CD8-positive, alpha-beta T cell (primary cell): ENCODE measurements at regions of chr3 and their contacts with region 1.

Region 1: DNA sequence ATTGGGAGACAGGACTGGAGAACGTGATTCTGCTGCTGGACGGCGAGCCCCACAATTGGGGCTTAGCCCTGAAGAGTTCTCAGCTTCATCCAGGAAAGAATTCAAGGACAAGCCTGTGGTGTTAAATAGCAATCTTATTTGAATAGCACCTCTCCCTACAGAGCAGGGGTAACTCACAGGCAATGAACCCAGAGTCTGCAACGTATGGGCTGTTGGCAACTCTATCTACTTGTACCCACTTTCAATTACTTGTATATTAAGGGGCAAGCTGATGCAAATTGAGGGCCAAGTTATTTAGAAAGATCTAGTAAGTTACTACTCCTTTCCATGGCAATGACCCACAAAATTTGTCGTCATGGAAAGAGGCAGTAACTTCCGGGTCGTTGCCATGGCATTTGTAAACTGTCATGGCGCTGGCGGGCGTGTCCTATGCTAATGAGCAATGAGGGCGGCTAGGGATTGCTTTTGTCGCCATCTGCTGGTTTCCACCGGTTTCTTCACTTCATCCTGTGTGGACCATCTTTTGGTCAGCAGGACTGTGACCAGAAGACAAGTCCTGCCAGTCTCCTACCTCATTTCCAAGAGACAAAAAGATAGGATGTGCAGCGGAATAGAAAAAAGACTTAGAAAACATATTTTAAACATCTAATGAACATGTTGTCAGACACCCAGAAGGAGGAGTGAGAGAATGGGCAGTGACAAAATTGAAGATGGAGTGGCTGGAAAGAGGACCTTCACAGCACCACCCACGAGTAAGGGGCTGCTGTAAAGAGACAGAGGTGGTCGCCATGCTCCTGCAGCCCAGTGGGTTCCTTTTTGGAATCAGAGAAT is 45.8 kb upstream of the SH3BP5 start:
- DNase-seq: peak; percentile 88 to 97 (median 93)
- ATAC-seq: peak; percentile 97
- H3K4me3 ChIP-seq: no peak overlapping the region
- H3K4me3 Mint-ChIP-seq: no peak overlapping the region
- H3K27ac ChIP-seq: peak overlapping the region; percentile 55 to 90
- H3K27ac Mint-ChIP-seq: peak overlapping the region; percentile 89
- H3K4me1 ChIP-seq: peaks cover 5% of the 10 kb centered on the region
- H3K4me1 Mint-ChIP-seq: peaks cover 8% of the 10 kb centered on the region
- H3K27me3 ChIP-seq: no peaks in the 10 kb centered on the region
- H3K27me3 Mint-ChIP-seq: no peaks in the 10 kb centered on the region
- CTCF ChIP-seq: peak; percentile 85

Region 2: DNA sequence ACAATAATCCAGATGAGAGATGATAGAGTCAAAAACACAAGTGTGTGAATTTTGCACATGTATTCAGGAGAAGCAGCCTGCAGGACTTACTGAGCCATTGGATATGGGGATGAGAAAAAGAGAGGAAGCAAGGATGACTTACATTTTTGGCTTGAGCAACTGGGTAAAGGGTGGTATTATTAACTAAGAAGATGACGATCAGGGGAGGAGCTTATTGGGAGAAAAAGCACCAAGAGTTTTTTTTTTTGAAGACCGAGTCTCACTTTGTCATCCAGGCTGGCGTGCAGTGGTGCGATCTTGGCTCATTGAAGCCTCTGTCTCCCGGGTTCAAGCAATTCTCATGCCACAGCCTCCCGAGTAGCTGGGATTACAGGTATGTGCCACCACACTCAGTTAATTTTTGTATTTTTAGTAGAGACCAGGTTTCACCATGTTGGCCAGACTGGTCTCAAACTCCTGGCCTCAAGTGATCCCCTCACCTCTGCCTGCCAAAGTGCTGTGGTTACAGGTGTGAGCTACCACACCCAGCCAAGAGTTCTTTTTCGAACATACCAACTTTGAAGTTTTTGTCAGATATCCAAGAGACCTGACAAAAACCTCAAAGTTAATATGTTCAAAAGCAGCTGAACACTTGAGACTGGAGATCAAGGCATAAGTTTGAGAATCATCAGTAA is 31.0 kb before region 1 on chr3:
- CTCF ChIA-PET with region 1: no interaction called
- POLR2A ChIA-PET with region 1: no interaction called
- intact Hi-C with region 1: no loop called
- DNase-seq: peak in 2 of 9 experiments; percentile 43 to 54
- ATAC-seq: peak; percentile 29
- H3K4me3 ChIP-seq: no peak overlapping the region
- H3K4me3 Mint-ChIP-seq: peak overlapping the region; percentile 69
- H3K27ac ChIP-seq: no peak overlapping the region
- H3K27ac Mint-ChIP-seq: peak overlapping the region; percentile 73
- H3K4me1 ChIP-seq: peaks cover 34% of the 10 kb centered on the region
- H3K4me1 Mint-ChIP-seq: peaks cover 35% of the 10 kb centered on the region
- H3K27me3 ChIP-seq: no peaks in the 10 kb centered on the region
- H3K27me3 Mint-ChIP-seq: no peaks in the 10 kb centered on the region
- CTCF ChIP-seq: no peak

Region 3: DNA sequence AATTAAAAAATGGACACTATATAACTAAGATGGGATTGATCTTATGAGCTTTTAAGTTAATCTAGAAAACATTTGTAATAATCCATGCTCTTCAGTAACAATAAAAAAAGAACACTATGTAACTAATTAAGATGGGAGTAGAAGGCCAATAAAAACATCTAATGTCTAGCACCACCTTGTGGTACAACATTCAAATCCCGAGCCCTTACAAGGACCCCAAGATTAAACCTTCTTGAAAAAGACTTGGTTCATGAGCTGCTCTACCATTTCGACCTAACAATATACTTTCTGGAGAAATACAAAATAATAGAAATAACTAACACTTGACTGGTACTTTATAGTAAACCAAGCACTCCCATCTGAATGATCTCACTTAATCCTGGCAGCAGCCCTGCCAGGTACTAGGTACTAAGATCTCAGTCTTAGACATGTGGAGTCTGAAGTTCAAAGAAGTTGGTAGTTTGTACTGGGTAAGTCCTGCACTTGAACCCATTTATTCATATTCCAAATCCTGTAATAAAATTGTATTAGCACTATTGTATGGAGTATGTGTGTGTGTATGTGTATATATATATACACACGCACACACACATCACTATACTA is 27.4 kb after region 1 on chr3:
- CTCF ChIA-PET with region 1: interaction called, 9 read pairs
- POLR2A ChIA-PET with region 1: no interaction called
- intact Hi-C with region 1: loop called in 1 of 2 experiments (anchors 1 kb)
- DNase-seq: peak in 3 of 9 experiments; percentile 22 to 77 (median 69)
- ATAC-seq: peak; percentile 73
- H3K4me3 ChIP-seq: no peak overlapping the region
- H3K4me3 Mint-ChIP-seq: no peak overlapping the region
- H3K27ac ChIP-seq: no peak overlapping the region
- H3K27ac Mint-ChIP-seq: no peak overlapping the region
- H3K4me1 ChIP-seq: no peaks in the 10 kb centered on the region
- H3K4me1 Mint-ChIP-seq: peaks cover 4% of the 10 kb centered on the region
- H3K27me3 ChIP-seq: no peaks in the 10 kb centered on the region
- H3K27me3 Mint-ChIP-seq: no peaks in the 10 kb centered on the region
- CTCF ChIP-seq: peak; percentile 61

Region 4: GRCh38 chr3:15557511-15557946 is 179.4 kb after region 1 on chr3:
- CTCF ChIA-PET with region 1: no interaction called
- POLR2A ChIA-PET with region 1: no interaction called
- intact Hi-C with region 1: loop called in 1 of 2 experiments (anchors 1 kb)
- DNase-seq: peak in 7 of 9 experiments; percentile 8 to 80 (median 43)
- ATAC-seq: peak; percentile 99
- H3K4me3 ChIP-seq: no peak overlapping the region
- H3K4me3 Mint-ChIP-seq: no peak overlapping the region
- H3K27ac ChIP-seq: no peak overlapping the region
- H3K27ac Mint-ChIP-seq: no peak overlapping the region
- H3K4me1 ChIP-seq: peaks cover 3% of the 10 kb centered on the region
- H3K4me1 Mint-ChIP-seq: peaks cover 16% of the 10 kb centered on the region
- H3K27me3 ChIP-seq: no peaks in the 10 kb centered on the region
- H3K27me3 Mint-ChIP-seq: no peaks in the 10 kb centered on the region
- CTCF ChIP-seq: peak; percentile 76

Region 5: DNA sequence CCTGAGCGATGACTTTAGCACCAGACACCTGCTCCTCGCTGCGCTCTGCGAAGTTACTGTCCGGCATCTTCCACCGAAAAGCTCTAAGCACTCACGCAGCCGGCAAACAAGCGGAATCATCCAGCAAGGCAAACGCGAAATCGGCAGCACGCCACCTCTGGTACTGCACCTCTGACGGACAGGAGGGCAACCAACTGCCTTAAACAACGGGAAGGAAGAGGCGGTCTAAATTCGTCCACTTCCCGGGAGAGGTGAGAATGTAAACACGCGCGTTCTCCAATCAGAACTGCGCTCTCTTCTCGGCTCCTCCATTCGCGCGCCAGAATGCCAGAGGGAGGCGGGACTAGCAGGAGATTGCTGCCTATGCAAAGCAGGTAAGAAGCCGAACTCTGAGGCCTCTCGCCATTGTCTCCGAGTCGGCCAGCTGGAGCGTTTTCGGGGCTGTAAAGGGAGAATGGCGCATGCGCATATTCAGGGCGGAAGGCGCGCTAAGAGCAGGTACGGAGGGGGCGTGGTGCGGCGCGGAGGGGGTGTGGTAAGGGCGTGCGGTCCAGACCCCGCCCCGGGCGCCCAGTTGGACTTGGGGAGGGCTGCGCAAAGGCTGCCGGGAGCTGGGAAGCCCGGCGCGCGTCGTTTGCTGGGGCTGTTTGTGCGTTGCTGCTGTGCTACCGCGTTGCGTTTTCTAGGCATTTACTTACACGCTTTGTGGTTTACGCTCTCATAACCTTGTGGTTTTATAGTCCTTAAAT is 223.4 kb after region 1 on chr3 and contains the starts of genes BTD and HACL1:
- CTCF ChIA-PET with region 1: no interaction called
- POLR2A ChIA-PET with region 1: no interaction called
- intact Hi-C with region 1: loop called in 1 of 2 experiments (anchors 1 kb)
- DNase-seq: peak; percentile 96 to 100 (median 99)
- ATAC-seq: peak; percentile 89
- H3K4me3 ChIP-seq: peak within 1 kb of the TSS; percentile 82 to 94
- H3K4me3 Mint-ChIP-seq: peak within 1 kb of the TSS; percentile 100
- H3K27ac ChIP-seq: peak within 1 kb of the TSS; percentile 82 to 88
- H3K27ac Mint-ChIP-seq: peak within 1 kb of the TSS; percentile 99
- H3K4me1 ChIP-seq: peaks cover 19% of the 10 kb centered on the region
- H3K4me1 Mint-ChIP-seq: peaks cover 54% of the 10 kb centered on the region
- H3K27me3 ChIP-seq: no peaks in the 10 kb centered on the region
- H3K27me3 Mint-ChIP-seq: no peaks in the 10 kb centered on the region
- CTCF ChIP-seq: peak; percentile 24
- total RNA-seq, gene BTD: 9.1 to 11.3 TPM
- total RNA-seq, gene HACL1: 30.1 to 33.4 TPM